Common myeloid progenitor, CD34-positive (primary cell): ENCODE measurements at regions of chr17 and their contacts with region 1.

Region 1: GRCh38 chr17:8189711-8190477 is at the start of gene BORCS6:
- DNase-seq: peak; percentile 97 to 99 (median 98)
- H3K4me3 ChIP-seq: peak within 1 kb of the TSS; percentile 75 to 92 (median 80)
- H3K27ac ChIP-seq: peak within 1 kb of the TSS in 1 of 2 experiments; percentile 81
- H3K4me1 ChIP-seq: peaks cover 15 to 53% (median 46%) of the 10 kb centered on the region in 4 experiments
- H3K27me3 ChIP-seq: no peaks in the 10 kb centered on the region

Region 2: DNA sequence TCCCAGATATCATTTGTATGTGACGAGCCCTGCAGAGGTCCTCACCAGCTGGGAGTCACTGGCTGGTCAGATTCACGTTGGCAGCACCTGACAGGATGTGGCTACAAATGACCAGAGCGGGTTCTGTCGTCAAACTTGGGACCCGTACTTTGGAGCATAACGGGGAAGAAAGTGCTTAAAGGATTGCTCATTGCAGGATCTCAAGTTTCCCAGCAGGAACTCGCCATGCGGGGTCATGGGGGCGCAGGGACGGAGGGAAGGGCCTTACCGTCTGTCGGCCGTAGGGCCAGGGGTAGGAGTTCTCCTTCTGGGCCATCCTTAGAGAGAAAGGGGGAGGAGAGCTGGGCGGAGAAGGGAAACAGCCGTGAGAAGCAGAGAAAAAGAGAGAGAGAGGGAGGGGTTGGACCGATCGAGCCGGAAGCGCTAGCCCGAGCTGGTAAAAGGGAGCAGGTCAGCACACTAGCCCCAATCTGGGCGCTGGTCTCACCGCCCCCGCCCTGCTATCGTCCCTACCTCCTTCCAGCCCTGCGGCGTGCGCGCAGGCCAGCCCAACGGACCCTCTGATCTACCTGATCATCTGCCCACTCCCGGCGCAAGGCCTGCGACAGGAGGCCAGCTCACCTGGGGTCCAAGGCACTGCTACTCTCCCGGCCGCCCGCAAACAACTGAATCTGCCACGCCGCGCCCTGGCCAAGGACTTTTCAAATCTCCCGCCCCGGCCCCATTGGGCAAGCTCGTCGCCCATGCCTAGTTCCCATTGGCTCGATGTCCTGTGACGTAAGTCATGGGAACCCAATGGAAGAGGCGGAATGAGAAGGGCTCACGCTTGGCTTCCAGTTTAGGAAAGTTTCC is 20.2 kb after region 1 on chr17 and contains the start of gene AURKB:
- CTCF ChIA-PET with region 1: interaction called, 17 read pairs
- POLR2A ChIA-PET with region 1: interaction called, 4 read pairs
- DNase-seq: peak; percentile 94 to 98 (median 96)
- H3K4me3 ChIP-seq: peak within 1 kb of the TSS; percentile 60 to 95 (median 86)
- H3K27ac ChIP-seq: peak within 1 kb of the TSS; percentile 64 to 84
- H3K4me1 ChIP-seq: peaks cover 4 to 33% (median 19%) of the 10 kb centered on the region in 4 experiments
- H3K27me3 ChIP-seq: no peaks in the 10 kb centered on the region

Region 3: DNA sequence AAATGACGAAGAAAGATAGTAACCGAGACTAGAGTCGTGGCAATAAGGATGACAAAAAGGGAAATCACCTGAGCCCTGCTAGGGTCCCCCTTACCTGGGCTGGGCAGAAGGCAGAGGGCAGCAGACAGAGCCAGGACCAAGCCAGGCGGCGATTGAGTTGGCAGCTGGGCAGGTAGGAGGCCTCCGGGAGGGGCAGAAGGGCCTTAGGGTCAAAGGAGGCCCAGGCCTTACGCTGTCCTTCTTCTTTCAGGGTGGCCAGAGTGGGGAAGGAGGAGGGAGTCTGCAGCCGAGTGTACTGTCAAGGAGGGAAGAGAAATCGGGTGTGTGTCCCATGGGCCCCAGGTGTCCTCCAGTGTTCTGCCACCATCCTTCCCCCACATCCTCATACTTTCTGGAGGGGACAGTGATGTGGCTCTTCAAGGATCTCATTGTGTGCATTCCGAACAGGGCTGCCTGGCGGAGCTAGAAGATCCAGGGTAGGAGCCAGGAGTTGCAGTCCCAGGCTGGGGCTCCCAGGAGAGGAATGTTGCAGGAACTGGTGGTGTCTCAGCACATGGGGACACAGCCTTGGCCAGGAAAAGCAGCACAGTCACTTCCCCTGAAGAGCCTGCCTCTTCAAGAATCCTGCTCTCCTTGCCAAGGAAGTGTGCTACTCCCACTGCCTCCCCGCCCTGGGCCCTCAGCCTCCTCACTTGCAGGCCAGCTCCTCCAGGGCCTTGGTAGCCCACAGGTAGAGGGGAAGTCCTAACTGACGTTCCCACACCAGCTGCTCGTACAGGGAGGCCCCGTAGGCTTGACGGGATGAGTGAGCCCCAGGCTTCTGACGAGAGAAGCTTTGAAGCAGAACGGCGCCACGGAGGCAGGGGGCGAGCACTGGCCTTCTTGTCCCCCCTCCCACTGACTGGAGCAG is 44.7 kb after region 1 on chr17:
- CTCF ChIA-PET with region 1: no interaction called
- POLR2A ChIA-PET with region 1: no interaction called
- DNase-seq: no peak
- H3K4me3 ChIP-seq: no peak overlapping the region
- H3K27ac ChIP-seq: no peak overlapping the region
- H3K4me1 ChIP-seq: no peaks in the 10 kb centered on the region
- H3K27me3 ChIP-seq: no peaks in the 10 kb centered on the region